ENCODE measurements at regions of chr11 and their contacts with region 1.

Region 1: GRCh38 chr11:117817368-117818040 is 7.0 kb downstream of the FXYD2 start:
- DNase-seq: peak; percentile 90
- H3K4me3 ChIP-seq: no peak overlapping the region
- H3K27ac ChIP-seq: no peak overlapping the region
- H3K4me1 ChIP-seq: peaks cover 28% of the 10 kb centered on the region
- H3K27me3 ChIP-seq: no peaks in the 10 kb centered on the region
- CTCF ChIP-seq: peak; percentile 99 to 100 (median 100)
- POLR2A ChIP-seq: no peak

Region 2: DNA sequence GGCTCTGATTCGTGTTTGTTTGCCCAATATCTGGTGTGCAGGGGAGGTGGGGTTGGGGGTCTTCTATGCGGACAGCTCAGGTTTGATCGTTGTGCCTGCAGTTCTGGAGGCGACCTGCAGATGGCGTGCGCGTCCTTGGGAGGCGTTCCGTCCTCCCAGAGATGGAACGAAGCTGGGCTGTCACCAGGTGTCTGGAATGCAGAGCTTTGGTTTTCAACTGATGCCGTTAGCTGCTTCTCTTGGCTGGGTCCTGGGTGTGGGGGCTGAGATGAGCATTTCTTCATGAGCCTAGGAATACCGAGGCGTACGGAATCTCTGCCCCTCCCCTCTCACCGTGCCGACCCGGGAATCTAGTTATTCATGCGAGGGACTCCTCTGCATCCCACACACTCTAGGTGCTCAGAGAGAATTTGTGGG is 391.2 kb before region 1 on chr11:
- intact Hi-C with region 1: loop called (anchors 5 kb)
- DNase-seq: peak; percentile 84
- H3K4me3 ChIP-seq: peak overlapping the region in 1 of 2 donors; percentile 8
- H3K27ac ChIP-seq: no peak overlapping the region
- H3K4me1 ChIP-seq: no peaks in the 10 kb centered on the region
- H3K27me3 ChIP-seq: no peaks in the 10 kb centered on the region
- CTCF ChIP-seq: peak; percentile 80 to 98 (median 88)
- POLR2A ChIP-seq: no peak

Region 3: GRCh38 chr11:117443266-117444195 is 374.0 kb before region 1 on chr11:
- intact Hi-C with region 1: loop called (anchors 5 kb)
- DNase-seq: peak; percentile 78
- H3K4me3 ChIP-seq: no peak overlapping the region
- H3K27ac ChIP-seq: no peak overlapping the region
- H3K4me1 ChIP-seq: no peaks in the 10 kb centered on the region
- H3K27me3 ChIP-seq: no peaks in the 10 kb centered on the region
- CTCF ChIP-seq: peak; percentile 32 to 51 (median 50)
- POLR2A ChIP-seq: no peak

Region 4: GRCh38 chr11:117713538-117713991 is 103.9 kb before region 1 on chr11:
- intact Hi-C with region 1: no loop called
- DNase-seq: no peak
- H3K4me3 ChIP-seq: no peak overlapping the region
- H3K27ac ChIP-seq: no peak overlapping the region
- H3K4me1 ChIP-seq: no peaks in the 10 kb centered on the region
- H3K27me3 ChIP-seq: no peaks in the 10 kb centered on the region
- CTCF ChIP-seq: no peak
- POLR2A ChIP-seq: no peak

Measured in testis (tissue), 5 donors.